CD8-positive, alpha-beta memory T cell (primary cell): ENCODE measurements at regions of chr11 and their contacts with region 1.

Region 1: DNA sequence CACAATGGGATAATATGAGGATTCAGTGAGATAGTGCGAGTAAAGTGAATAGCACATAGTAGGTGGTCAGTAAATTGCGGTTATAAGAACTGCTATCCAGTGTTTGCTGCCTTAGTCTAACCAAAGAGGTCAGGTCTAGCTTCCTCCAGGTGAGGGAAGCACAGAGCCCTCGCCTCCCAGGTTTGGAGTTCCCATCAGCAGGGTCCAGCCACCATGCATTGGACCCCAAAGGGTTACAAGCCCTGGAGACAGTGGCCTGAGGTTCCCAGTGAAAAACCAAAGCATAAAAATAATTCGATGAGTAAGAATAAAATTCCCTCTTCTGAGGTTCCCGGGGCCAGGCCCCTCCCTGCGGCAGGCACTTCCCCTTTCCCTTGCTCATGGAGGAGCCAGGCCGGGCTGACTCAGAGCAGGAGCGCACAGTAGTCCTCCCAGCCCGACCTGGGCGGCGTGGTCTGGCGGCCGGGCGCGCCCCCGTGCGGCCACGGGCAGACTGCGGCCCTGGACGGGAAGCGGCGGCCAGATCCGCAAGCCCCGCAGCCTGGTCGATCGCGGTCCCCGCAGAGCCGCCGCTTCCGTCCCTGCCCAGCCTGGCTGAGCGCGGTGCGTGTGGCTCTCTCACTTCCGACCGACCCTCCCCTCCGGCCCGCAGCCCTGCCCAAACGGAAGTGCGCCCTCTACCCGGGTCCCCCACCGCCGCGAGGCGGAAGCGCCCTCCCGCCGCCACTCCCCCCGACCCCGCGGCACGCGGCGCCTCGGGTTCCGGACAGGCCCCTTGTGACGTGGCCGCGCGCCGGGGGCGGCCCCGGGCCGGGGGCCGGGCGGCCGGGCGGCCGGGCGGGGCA is at the start of gene SLC39A13:
- DNase-seq: peak; percentile 85 to 92 (median 89)
- H3K4me3 ChIP-seq: peak within 1 kb of the TSS; percentile 72
- H3K4me3 Mint-ChIP-seq: peak within 1 kb of the TSS; percentile 87 to 96 (median 91)
- H3K27ac ChIP-seq: peak within 1 kb of the TSS; percentile 69
- H3K27ac Mint-ChIP-seq: peak within 1 kb of the TSS; percentile 88 to 98 (median 94)
- H3K4me1 ChIP-seq: peaks cover 19% of the 10 kb centered on the region
- H3K4me1 Mint-ChIP-seq: peaks cover 15 to 32% (median 19%) of the 10 kb centered on the region in 3 donors
- H3K27me3 ChIP-seq: no peaks in the 10 kb centered on the region
- H3K27me3 Mint-ChIP-seq: no peaks in the 10 kb centered on the region
- total RNA-seq, gene SLC39A13: 20.2 to 23.4 TPM

Region 2: GRCh38 chr11:47394322-47395222 is 13.4 kb before region 1 on chr11:
- CTCF ChIA-PET with region 1: interaction called, 21 read pairs
- POLR2A ChIA-PET with region 1: interaction called, 5 read pairs
- DNase-seq: peak; percentile 31 to 73 (median 40)
- H3K4me3 ChIP-seq: peak overlapping the region; percentile 68
- H3K4me3 Mint-ChIP-seq: peak overlapping the region; percentile 48 to 74 (median 68)
- H3K27ac ChIP-seq: peak overlapping the region; percentile 79
- H3K27ac Mint-ChIP-seq: peak overlapping the region; percentile 77 to 93 (median 85)
- H3K4me1 ChIP-seq: peaks cover 42% of the 10 kb centered on the region
- H3K4me1 Mint-ChIP-seq: peaks cover 40 to 75% (median 55%) of the 10 kb centered on the region in 3 donors
- H3K27me3 ChIP-seq: no peaks in the 10 kb centered on the region
- H3K27me3 Mint-ChIP-seq: no peaks in the 10 kb centered on the region

Region 3: GRCh38 chr11:47426061-47426956 is 18.3 kb after region 1 on chr11 and contains the start of gene PSMC3:
- CTCF ChIA-PET with region 1: interaction called, 24 read pairs
- POLR2A ChIA-PET with region 1: interaction called, 6 read pairs
- DNase-seq: peak; percentile 95 to 97 (median 97)
- H3K4me3 ChIP-seq: peak within 1 kb of the TSS; percentile 99
- H3K4me3 Mint-ChIP-seq: peak within 1 kb of the TSS; percentile 93 to 99 (median 99)
- H3K27ac ChIP-seq: peak within 1 kb of the TSS; percentile 93
- H3K27ac Mint-ChIP-seq: peak within 1 kb of the TSS; percentile 84 to 99 (median 98)
- H3K4me1 ChIP-seq: peaks cover 13% of the 10 kb centered on the region
- H3K4me1 Mint-ChIP-seq: peaks cover 23 to 31% (median 31%) of the 10 kb centered on the region in 3 donors
- H3K27me3 ChIP-seq: no peaks in the 10 kb centered on the region
- H3K27me3 Mint-ChIP-seq: peaks cover 0 to 5% of the 10 kb centered on the region in 2 donors
- total RNA-seq, gene PSMC3: 200 to 219 TPM

Region 4: DNA sequence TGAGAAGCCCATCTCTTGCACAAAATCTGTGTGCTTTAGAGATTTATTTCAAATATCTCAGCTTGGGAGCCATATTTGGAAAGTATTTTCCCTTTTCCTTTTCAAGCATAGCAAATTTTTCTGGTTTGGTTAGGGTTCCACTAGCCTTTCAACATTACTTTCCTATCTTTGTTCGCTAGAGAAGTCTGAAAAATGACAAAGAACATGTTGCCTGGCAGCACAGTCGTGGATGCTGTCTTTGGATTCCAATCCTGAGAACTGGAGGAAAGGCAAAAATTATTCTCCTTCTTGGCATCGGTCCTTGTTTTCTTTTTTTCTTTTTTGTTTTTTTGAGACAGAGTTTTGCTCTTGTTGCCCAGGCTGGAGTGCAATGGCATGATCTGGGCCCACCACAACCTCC is 241.3 kb after region 1 on chr11:
- CTCF ChIA-PET with region 1: no interaction called
- POLR2A ChIA-PET with region 1: no interaction called
- DNase-seq: no peak
- H3K4me3 ChIP-seq: no peak overlapping the region
- H3K4me3 Mint-ChIP-seq: no peak overlapping the region
- H3K27ac ChIP-seq: no peak overlapping the region
- H3K27ac Mint-ChIP-seq: no peak overlapping the region
- H3K4me1 ChIP-seq: no peaks in the 10 kb centered on the region
- H3K4me1 Mint-ChIP-seq: no peaks in the 10 kb centered on the region
- H3K27me3 ChIP-seq: no peaks in the 10 kb centered on the region
- H3K27me3 Mint-ChIP-seq: no peaks in the 10 kb centered on the region